WTC11 (cell line): ENCODE measurements at regions of chr3 and their contacts with region 1.

Region 1: DNA sequence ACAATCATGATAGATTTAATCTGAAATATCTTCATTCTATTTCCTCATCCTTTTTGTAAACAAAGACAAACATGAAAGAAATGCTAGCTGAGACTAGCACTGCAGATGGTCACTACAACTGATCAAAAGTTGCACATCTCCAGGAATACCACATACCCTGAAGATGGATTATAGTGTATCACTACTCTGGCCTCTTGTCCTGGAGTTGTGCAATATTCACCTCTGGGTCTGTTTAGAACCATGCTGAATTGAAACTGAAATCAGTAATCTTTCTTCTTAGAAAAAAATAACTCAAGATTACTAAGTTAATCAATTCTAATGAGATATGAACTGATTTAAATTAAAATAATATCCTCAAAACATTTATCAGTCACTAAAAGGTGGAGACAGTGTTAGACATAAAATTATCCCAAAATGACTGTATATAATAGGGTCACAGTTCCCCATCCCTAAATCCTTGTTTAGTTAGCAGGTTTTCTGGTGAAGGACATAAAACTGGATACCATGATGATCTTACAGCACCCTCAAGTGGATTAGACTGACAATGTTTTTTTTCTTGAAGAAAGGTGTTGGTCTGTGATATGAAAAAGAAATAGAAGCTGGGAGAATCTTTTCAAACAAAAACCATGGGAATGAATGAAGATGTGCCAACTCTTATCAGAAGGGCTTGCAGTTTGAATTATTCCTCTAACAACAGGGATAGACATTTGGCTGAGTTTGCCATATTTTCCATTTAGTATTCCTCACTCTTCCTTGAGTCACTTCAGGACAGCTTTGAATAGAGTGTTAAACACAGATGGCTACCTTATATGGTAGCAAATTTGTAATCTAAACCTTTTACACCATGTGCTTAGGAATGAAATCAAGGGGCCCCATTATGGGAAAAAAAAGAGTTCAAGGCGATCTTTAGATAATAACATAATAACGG is 7.1 kb upstream of the TTC14 start:
- DNase-seq: no peak
- ATAC-seq: peak; percentile 41; the same call in 1 of the 2 replicates
- H3K4me3 Mint-ChIP-seq: no peak overlapping the region
- H3K27ac Mint-ChIP-seq: no peak overlapping the region
- H3K4me1 Mint-ChIP-seq: no peaks in the 10 kb centered on the region
- H3K27me3 Mint-ChIP-seq: peaks cover 28% of the 10 kb centered on the region
- CTCF ChIP-seq: no peak

Region 2: DNA sequence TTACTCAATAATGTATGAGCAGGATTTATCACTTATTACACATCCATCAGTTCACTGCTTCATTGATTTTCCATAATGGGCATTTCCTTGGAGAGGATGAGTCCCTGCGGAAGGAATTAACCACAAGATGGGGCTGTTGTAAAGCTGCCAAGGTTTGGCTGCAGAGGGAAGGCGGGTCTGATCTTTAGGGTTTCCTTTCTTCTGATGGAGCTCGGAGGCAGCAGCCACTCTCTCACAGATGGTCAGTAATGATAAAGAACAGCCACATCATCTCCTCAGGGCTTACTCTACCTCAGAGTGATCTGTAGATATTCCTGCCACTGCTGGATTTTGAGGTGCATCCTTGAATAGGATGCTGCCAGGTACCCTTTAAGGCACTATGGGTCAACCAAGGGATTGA is 826.8 kb before region 1 on chr3:
- CTCF ChIA-PET with region 1: interaction called, 14 read pairs
- POLR2A ChIA-PET with region 1: no interaction called
- DNase-seq: peak; percentile 53
- ATAC-seq: peak; percentile 84
- H3K4me3 Mint-ChIP-seq: no peak overlapping the region
- H3K27ac Mint-ChIP-seq: 0 out of 2 replicates have a peak overlapping the region, but pooled peaks have one; percentile 21
- H3K4me1 Mint-ChIP-seq: peaks cover 28% of the 10 kb centered on the region
- H3K27me3 Mint-ChIP-seq: no peaks in the 10 kb centered on the region
- CTCF ChIP-seq: peak; percentile 53

Region 3: DNA sequence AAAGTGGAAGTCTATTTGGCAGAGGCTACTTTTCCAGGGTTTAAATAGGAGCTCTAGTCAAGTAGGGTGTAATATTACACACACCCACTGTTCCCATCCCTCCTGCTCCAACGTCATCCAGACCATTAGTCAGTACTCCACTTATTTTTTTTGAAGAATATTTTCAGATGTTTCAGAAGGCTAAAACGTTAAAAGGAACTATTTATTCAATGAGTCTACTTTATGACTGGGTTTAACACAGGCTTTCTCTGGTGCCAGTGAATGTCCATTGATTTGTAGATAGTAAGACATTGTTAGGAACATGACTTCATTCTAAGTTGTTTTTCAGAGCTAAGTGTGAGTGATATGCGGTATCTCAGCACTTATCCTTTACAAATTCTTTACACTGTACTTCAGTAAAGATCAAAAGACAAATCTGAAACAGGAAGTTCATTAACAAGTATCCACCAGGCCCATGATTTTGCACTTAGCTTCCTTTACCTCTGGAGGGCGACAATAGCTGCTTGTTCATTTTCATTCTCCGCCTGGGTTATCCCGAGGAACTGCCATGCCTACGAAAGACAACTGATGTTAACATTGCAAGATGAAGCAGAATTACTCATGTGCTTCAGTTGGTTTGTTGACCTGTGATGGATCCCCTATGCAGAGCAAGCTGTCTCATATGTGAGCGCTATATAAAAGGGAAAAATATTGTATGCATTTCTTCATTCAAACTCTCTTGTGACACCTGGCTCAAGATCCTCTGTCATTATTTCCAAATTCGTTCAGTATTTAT is 783.4 kb before region 1 on chr3:
- CTCF ChIA-PET with region 1: interaction called, 10 read pairs
- POLR2A ChIA-PET with region 1: interaction called, 3 read pairs
- DNase-seq: peak; percentile 44
- ATAC-seq: peak; percentile 95
- H3K4me3 Mint-ChIP-seq: no peak overlapping the region
- H3K27ac Mint-ChIP-seq: no peak overlapping the region
- H3K4me1 Mint-ChIP-seq: peaks cover 4% of the 10 kb centered on the region
- H3K27me3 Mint-ChIP-seq: no peaks in the 10 kb centered on the region
- CTCF ChIP-seq: peak; percentile 59; the same call in 1 of the 2 replicates

Region 4: GRCh38 chr3:179929091-179929529 is 665.8 kb before region 1 on chr3:
- CTCF ChIA-PET with region 1: interaction called, 13 read pairs
- POLR2A ChIA-PET with region 1: no interaction called
- DNase-seq: peak; percentile 67
- ATAC-seq: peak; percentile 70
- H3K4me3 Mint-ChIP-seq: no peak overlapping the region
- H3K27ac Mint-ChIP-seq: no peak overlapping the region
- H3K4me1 Mint-ChIP-seq: peaks cover 23% of the 10 kb centered on the region
- H3K27me3 Mint-ChIP-seq: no peaks in the 10 kb centered on the region
- CTCF ChIP-seq: peak; percentile 38; the same call in 1 of the 2 replicates

Region 5: GRCh38 chr3:180575571-180575970 is 19.3 kb before region 1 on chr3:
- CTCF ChIA-PET with region 1: no interaction called
- POLR2A ChIA-PET with region 1: no interaction called
- DNase-seq: no peak
- ATAC-seq: no peak
- H3K4me3 Mint-ChIP-seq: no peak overlapping the region
- H3K27ac Mint-ChIP-seq: no peak overlapping the region
- H3K4me1 Mint-ChIP-seq: peaks cover 11% of the 10 kb centered on the region
- H3K27me3 Mint-ChIP-seq: no peaks in the 10 kb centered on the region
- CTCF ChIP-seq: no peak

Region 6: GRCh38 chr3:180626844-180627243 is 31.9 kb after region 1 on chr3:
- CTCF ChIA-PET with region 1: no interaction called
- POLR2A ChIA-PET with region 1: no interaction called
- DNase-seq: no peak
- ATAC-seq: no peak
- H3K4me3 Mint-ChIP-seq: no peak overlapping the region
- H3K27ac Mint-ChIP-seq: no peak overlapping the region
- H3K4me1 Mint-ChIP-seq: peaks cover 18% of the 10 kb centered on the region
- H3K27me3 Mint-ChIP-seq: no peaks in the 10 kb centered on the region
- CTCF ChIP-seq: no peak